H1 (cell line): ENCODE measurements at regions of chr3 and their contacts with region 1.

Region 1: DNA sequence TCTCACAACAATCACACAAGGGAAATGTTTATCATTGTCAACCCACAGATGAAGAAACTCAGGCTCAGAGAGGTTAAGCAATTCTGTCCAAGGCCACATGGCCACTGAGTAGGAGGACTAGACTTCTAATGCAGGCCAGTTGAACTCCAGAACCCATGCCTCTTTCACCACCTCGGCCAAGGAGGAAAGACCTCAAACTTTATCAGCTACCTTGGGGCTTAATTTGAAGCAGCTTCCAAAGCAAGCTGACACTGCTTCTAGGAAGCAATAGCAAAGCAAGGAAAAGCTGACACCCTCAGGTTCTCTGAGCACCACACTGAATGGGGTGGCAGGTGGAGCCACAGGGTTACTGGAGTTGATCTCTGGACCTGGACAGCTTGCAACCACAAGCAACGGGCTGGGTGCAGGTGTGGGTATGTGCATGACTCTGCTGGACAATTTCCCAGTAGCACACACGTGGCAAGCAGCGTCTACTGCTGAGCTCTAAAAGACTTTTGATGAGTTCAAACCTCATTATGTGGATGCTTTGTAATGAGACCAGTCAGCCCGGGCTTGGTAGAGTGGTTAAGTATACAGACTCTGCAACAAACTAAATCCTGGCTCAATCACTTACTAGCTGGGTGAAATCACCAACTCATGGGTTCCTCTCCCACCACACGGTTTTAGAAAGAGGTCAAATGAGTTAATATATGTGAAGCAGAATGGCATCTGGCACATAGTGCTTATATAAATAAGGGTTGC is 23.1 kb downstream of the CCNL1 start:
- DNase-seq: no peak
- H3K4me3 ChIP-seq: no peak overlapping the region
- H3K27ac ChIP-seq: no peak overlapping the region
- H3K4me1 ChIP-seq: no peaks in the 10 kb centered on the region
- H3K27me3 ChIP-seq: no peaks in the 10 kb centered on the region
- CTCF ChIP-seq: no peak
- EP300 ChIP-seq: no peak
- POLR2A ChIP-seq: no peak
- RAD21 ChIP-seq: no peak

Region 2: GRCh38 chr3:157059661-157060060 is 77.2 kb before region 1 on chr3:
- CTCF ChIA-PET with region 1: no interaction called
- POLR2A ChIA-PET with region 1: no interaction called
- DNase-seq: no peak
- H3K4me3 ChIP-seq: no peak overlapping the region
- H3K27ac ChIP-seq: no peak overlapping the region
- H3K4me1 ChIP-seq: peaks cover 0 to 6% (median 2%) of the 10 kb centered on the region in 4 experiments; a peak in 4 of 7 replicates
- H3K27me3 ChIP-seq: peaks cover 0 to 6% (median 1%) of the 10 kb centered on the region in 4 experiments; a peak in 3 of 7 replicates
- CTCF ChIP-seq: no peak
- EP300 ChIP-seq: no peak
- POLR2A ChIP-seq: no peak
- RAD21 ChIP-seq: no peak

Region 3: DNA sequence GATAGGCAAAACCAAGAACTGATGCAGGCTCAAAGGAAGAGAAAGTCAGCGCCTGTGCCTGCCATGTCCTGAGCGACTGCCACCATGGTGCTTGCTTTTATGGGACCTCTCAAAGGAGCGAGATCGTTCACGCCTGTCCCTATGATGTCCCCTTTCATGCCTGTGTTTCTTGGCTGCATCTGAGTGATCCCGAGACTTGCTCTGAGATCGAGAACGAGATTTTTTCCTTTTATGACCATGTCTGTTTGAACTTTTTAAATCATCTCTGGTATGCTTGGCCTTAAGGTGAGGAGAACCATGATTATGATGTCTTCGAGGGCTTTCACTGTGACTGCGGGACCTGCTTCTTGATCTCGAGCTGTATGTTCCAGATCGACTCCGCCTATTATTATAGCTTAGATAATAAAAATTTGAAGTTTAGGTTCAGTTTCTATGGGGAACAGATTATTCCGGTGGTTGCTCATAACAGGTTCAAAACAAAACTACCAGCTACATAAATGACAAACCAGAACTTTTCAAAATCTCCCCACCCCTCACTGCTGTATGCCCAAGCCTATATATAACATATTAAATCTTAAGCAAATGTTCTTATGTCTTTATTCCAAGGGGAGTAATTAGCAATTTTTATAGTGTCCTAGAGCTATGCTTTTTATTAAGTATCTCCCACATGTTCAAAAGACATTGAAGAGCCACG is 11.5 kb after region 1 on chr3:
- CTCF ChIA-PET with region 1: interaction called, 19 read pairs
- POLR2A ChIA-PET with region 1: interaction called, 6 read pairs
- DNase-seq: no peak
- H3K4me3 ChIP-seq: no peak overlapping the region
- H3K27ac ChIP-seq: no peak overlapping the region
- H3K4me1 ChIP-seq: no peaks in the 10 kb centered on the region
- H3K27me3 ChIP-seq: peaks cover 0 to 1% (median 0%) of the 10 kb centered on the region in 4 experiments; a peak in 1 of 7 replicates
- CTCF ChIP-seq: no peak
- EP300 ChIP-seq: no peak
- POLR2A ChIP-seq: peak in 1 of 2 experiments; percentile 63; a peak in 2 of 3 replicates
- RAD21 ChIP-seq: no peak